CD8-positive, alpha-beta T cell (primary cell): ENCODE measurements at regions of chr6 and their contacts with region 1.

Region 1: DNA sequence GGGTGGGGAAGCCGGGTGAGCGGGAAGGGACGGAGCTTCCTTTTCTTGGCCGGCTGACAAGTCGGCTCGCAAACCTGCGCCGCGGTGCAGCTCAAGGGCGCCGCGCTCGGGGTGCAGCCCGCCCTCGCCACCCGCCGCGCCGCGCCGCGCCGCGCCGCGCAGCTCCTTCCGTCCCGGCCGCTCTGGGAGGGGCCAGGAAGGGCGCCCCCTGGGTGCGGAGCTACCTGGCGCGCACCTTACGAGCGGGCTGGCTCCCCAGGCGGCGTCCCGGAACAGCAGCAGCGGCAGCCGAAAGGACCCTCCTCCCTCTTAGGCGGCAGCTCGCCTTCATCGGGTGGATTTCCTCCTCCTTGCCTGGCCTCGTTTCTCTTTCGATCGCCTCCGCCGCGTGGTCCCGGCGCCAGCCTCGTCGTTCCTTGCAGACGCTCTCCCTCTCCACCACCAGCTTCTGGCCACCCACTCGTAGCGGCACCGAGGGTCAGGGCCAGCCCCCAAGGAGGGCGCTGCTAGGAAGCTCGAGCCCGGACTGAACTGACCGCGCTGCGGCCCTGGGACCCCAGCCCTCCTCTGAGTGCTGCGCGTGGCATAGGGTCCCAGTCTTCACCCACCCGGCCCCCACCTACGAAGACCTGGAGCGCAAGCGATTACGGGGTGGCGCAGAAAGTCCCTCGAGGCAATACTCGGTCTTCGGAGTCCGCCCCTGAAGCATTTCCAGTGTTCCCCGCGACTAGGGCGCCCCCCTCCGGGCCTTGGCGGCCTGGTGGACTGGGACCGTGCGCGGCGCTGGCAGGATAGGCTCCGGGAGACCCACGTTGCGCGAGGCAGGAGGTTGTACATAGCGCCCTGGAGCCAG is at the start of gene MAP3K5:
- DNase-seq: peak; percentile 92 to 98 (median 95)
- ATAC-seq: peak; percentile 80
- H3K4me3 ChIP-seq: peak within 1 kb of the TSS; percentile 98 to 99
- H3K4me3 Mint-ChIP-seq: peak within 1 kb of the TSS; percentile 94
- H3K27ac ChIP-seq: peak within 1 kb of the TSS; percentile 92 to 96
- H3K27ac Mint-ChIP-seq: peak within 1 kb of the TSS; percentile 96
- H3K4me1 ChIP-seq: peaks cover 36% of the 10 kb centered on the region
- H3K4me1 Mint-ChIP-seq: peaks cover 39% of the 10 kb centered on the region
- H3K27me3 ChIP-seq: no peaks in the 10 kb centered on the region
- H3K27me3 Mint-ChIP-seq: no peaks in the 10 kb centered on the region
- CTCF ChIP-seq: peak; percentile 72
- total RNA-seq, gene MAP3K5: 11.1 to 11.3 TPM

Region 2: DNA sequence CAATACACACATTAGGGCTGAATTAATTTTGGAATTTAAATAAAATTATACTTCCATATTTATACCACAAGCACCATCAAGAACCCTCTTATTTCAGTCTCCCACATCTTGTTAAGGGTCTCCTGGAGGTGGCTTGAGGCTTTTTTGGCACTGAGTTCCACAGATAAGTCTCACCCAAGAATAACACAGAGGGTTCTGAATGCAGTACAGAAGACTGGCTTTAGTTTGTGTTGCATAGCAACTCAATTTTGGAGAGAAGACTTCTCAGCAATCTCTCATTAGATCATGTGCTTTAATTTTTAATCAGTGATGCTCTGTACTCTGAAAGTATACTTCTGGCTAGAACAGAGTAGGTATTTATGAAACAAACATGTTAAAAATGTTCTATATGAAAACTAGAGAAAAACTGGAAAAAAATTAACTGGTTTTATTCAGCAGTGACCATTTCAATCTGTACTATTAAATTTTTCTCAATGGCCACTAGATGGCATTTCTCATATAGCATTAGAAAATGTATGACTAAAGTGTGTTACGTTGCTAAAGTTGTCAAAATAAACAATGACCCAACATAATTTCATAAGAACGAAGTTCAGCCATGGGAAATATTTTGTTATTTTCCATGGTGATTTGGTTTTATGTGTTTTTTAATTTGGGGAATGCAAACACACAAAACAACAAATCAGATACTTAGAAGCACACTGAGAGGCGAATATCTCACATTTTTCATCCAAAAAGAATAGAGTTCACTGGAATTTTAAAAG is 209.7 kb before region 1 on chr6:
- CTCF ChIA-PET with region 1: interaction called, 11 read pairs
- POLR2A ChIA-PET with region 1: no interaction called
- intact Hi-C with region 1: loop called in 1 of 2 experiments (anchors 1 kb)
- DNase-seq: peak in 1 of 9 experiments; percentile 22
- ATAC-seq: no peak
- H3K4me3 ChIP-seq: no peak overlapping the region
- H3K4me3 Mint-ChIP-seq: no peak overlapping the region
- H3K27ac ChIP-seq: no peak overlapping the region
- H3K27ac Mint-ChIP-seq: no peak overlapping the region
- H3K4me1 ChIP-seq: no peaks in the 10 kb centered on the region
- H3K4me1 Mint-ChIP-seq: no peaks in the 10 kb centered on the region
- H3K27me3 ChIP-seq: no peaks in the 10 kb centered on the region
- H3K27me3 Mint-ChIP-seq: no peaks in the 10 kb centered on the region
- CTCF ChIP-seq: no peak

Region 3: DNA sequence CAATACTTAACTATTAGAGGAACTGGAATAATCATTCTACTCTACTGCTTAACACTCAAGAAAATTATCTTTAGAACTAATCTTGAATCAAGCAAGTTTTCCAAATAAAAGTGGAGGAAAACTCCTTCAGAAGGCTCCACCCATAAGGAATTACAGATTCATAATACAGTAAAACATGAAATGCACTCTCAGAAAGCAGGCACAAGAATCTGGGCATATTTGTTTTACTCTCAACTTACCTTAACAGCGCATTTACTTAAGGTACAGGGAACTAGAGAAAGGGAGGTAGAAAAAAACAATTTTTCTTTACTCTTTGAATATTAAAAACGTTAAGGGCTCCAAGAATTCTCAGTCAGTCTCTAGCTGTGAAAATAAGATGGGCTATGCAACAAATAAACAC is 140.7 kb before region 1 on chr6:
- CTCF ChIA-PET with region 1: interaction called, 269 read pairs
- POLR2A ChIA-PET with region 1: interaction called, 21 read pairs
- intact Hi-C with region 1: no loop called
- DNase-seq: no peak
- ATAC-seq: no peak
- H3K4me3 ChIP-seq: no peak overlapping the region
- H3K4me3 Mint-ChIP-seq: no peak overlapping the region
- H3K27ac ChIP-seq: no peak overlapping the region
- H3K27ac Mint-ChIP-seq: no peak overlapping the region
- H3K4me1 ChIP-seq: peaks cover 9% of the 10 kb centered on the region
- H3K4me1 Mint-ChIP-seq: no peaks in the 10 kb centered on the region
- H3K27me3 ChIP-seq: no peaks in the 10 kb centered on the region
- H3K27me3 Mint-ChIP-seq: no peaks in the 10 kb centered on the region
- CTCF ChIP-seq: no peak

Region 4: DNA sequence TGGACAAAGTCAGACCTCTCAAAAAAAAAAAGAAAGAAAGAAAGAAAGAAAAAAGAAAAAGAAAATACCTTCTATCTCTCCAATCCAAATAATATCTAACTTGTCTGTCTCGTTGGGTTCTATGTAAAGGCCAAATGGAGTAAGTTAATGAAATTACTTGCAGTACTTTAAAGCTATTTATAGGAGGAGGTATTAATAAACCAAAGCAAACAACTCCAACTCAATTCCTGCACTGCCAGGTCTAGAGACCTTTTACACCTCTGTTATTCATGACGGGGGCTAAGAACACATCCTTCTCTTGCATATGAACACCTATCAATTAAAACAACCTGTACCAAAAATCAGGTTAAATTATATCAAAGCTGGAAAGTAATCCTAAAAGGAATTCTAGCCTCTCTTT is 81.0 kb before region 1 on chr6:
- CTCF ChIA-PET with region 1: interaction called, 36 read pairs
- POLR2A ChIA-PET with region 1: interaction called, 3 read pairs
- intact Hi-C with region 1: no loop called
- DNase-seq: no peak
- ATAC-seq: no peak
- H3K4me3 ChIP-seq: no peak overlapping the region
- H3K4me3 Mint-ChIP-seq: no peak overlapping the region
- H3K27ac ChIP-seq: no peak overlapping the region
- H3K27ac Mint-ChIP-seq: no peak overlapping the region
- H3K4me1 ChIP-seq: no peaks in the 10 kb centered on the region
- H3K4me1 Mint-ChIP-seq: peaks cover 7% of the 10 kb centered on the region
- H3K27me3 ChIP-seq: no peaks in the 10 kb centered on the region
- H3K27me3 Mint-ChIP-seq: no peaks in the 10 kb centered on the region
- CTCF ChIP-seq: no peak

Region 5: GRCh38 chr6:136745300-136745699 is 47.3 kb before region 1 on chr6:
- CTCF ChIA-PET with region 1: interaction called, 63 read pairs
- POLR2A ChIA-PET with region 1: interaction called, 29 read pairs
- intact Hi-C with region 1: loop called in 1 of 2 experiments (anchors 2 kb)
- DNase-seq: no peak
- ATAC-seq: no peak
- H3K4me3 ChIP-seq: no peak overlapping the region
- H3K4me3 Mint-ChIP-seq: no peak overlapping the region
- H3K27ac ChIP-seq: no peak overlapping the region
- H3K27ac Mint-ChIP-seq: no peak overlapping the region
- H3K4me1 ChIP-seq: peaks cover 5% of the 10 kb centered on the region
- H3K4me1 Mint-ChIP-seq: peaks cover 42% of the 10 kb centered on the region
- H3K27me3 ChIP-seq: no peaks in the 10 kb centered on the region
- H3K27me3 Mint-ChIP-seq: no peaks in the 10 kb centered on the region
- CTCF ChIP-seq: no peak

Region 6: DNA sequence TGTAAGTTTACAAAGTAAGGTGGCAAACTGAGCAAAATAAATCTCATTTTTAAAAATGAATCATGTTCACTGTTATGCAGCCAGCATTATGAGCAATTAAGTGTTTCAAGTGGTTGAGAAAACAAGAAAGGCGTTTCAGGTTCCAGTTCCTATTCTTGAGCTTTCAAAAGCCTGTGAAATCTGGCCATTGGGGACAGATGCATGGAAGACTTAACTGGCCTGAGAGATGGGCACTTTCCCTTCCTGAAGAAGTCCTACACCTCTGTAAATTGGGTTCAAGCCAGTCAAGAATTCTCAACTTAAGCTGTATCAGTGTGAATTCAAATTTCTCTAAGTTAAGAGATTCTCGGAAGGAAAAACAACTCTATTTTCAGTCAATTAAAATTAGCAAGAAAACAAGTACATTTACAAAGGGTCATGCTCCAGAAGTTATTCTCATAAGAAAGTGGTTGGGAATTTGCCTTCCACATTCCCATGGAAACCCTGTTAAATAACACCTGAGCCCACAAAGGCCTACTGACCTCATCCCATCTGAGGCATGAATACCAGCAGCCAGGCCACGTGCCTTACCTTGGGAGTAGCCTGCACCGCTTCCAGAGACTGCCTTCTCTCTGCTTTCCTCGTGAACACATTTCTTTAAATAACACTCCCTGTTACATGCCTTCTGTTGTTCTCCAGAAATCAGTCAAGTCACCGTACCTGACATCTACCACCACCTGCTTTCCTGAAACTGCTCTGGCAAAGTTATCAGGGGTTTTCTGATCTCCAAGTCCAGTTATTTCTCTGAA is 19.8 kb before region 1 on chr6:
- CTCF ChIA-PET with region 1: interaction called, 19 read pairs
- POLR2A ChIA-PET with region 1: interaction called, 3 read pairs
- intact Hi-C with region 1: no loop called
- DNase-seq: no peak
- ATAC-seq: no peak
- H3K4me3 ChIP-seq: no peak overlapping the region
- H3K4me3 Mint-ChIP-seq: no peak overlapping the region
- H3K27ac ChIP-seq: no peak overlapping the region
- H3K27ac Mint-ChIP-seq: peak overlapping the region; percentile 75
- H3K4me1 ChIP-seq: peaks cover 2% of the 10 kb centered on the region
- H3K4me1 Mint-ChIP-seq: peaks cover 60% of the 10 kb centered on the region
- H3K27me3 ChIP-seq: no peaks in the 10 kb centered on the region
- H3K27me3 Mint-ChIP-seq: no peaks in the 10 kb centered on the region
- CTCF ChIP-seq: no peak

Region 7: DNA sequence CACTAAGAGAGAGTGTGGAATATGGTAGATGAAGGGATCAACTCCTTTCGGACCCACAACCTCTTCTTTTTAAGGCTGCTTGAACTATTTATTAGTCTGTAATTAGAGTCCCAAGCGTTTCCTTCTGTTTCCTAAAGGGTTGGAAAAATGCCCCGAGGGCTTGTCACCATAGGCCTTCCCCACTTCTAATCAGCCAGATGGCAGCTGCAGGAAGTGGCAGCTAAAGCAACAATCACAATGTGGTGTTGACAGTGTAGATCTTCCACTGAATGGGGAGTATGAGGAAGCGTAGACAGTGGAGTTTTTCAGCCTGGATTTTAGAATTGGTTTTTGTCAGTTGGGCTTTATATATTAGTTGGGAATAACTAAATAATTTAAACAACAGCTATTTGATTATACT is 170.0 kb after region 1 on chr6:
- CTCF ChIA-PET with region 1: no interaction called
- POLR2A ChIA-PET with region 1: no interaction called
- intact Hi-C with region 1: no loop called
- DNase-seq: no peak
- ATAC-seq: no peak
- H3K4me3 ChIP-seq: no peak overlapping the region
- H3K4me3 Mint-ChIP-seq: no peak overlapping the region
- H3K27ac ChIP-seq: no peak overlapping the region
- H3K27ac Mint-ChIP-seq: no peak overlapping the region
- H3K4me1 ChIP-seq: no peaks in the 10 kb centered on the region
- H3K4me1 Mint-ChIP-seq: no peaks in the 10 kb centered on the region
- H3K27me3 ChIP-seq: no peaks in the 10 kb centered on the region
- H3K27me3 Mint-ChIP-seq: peaks cover 23% of the 10 kb centered on the region
- CTCF ChIP-seq: no peak